ENCODE measurements at regions of chr10 and their contacts with region 1.

Region 1: GRCh38 chr10:131885391-131886161 is 15.2 kb upstream of the PPP2R2D start:
- DNase-seq: peak; percentile 54 to 79
- H3K4me3 ChIP-seq: no peak overlapping the region
- H3K27ac ChIP-seq: no peak overlapping the region
- H3K4me1 ChIP-seq: peaks cover 0 to 3% (median 2%) of the 10 kb centered on the region in 4 donors
- H3K27me3 ChIP-seq: peaks cover 0 to 49% of the 10 kb centered on the region in 2 donors
- CTCF ChIP-seq: peak; percentile 93 to 95

Region 2: GRCh38 chr10:131670341-131670740 is 215.2 kb before region 1 on chr10:
- intact Hi-C with region 1: no loop called
- DNase-seq: no peak
- H3K4me3 ChIP-seq: no peak overlapping the region
- H3K27ac ChIP-seq: no peak overlapping the region
- H3K4me1 ChIP-seq: no peaks in the 10 kb centered on the region
- H3K27me3 ChIP-seq: no peaks in the 10 kb centered on the region
- CTCF ChIP-seq: no peak

Region 3: GRCh38 chr10:131846240-131847101 is 39.1 kb before region 1 on chr10:
- intact Hi-C with region 1: no loop called
- DNase-seq: peak; percentile 11 to 48
- H3K4me3 ChIP-seq: no peak overlapping the region
- H3K27ac ChIP-seq: no peak overlapping the region
- H3K4me1 ChIP-seq: no peaks in the 10 kb centered on the region
- H3K27me3 ChIP-seq: peaks cover 0 to 15% of the 10 kb centered on the region in 2 donors
- CTCF ChIP-seq: no peak

Region 4: GRCh38 chr10:132023092-132023811 is 137.7 kb after region 1 on chr10:
- intact Hi-C with region 1: loop called (anchors 1 kb)
- DNase-seq: peak; percentile 66 to 84
- H3K4me3 ChIP-seq: peak overlapping the region; percentile 4 to 28
- H3K27ac ChIP-seq: no peak overlapping the region
- H3K4me1 ChIP-seq: peaks cover 0 to 9% (median 4%) of the 10 kb centered on the region in 4 donors
- H3K27me3 ChIP-seq: peaks cover 0 to 47% of the 10 kb centered on the region in 2 donors
- CTCF ChIP-seq: peak; percentile 89 to 91

Region 5: GRCh38 chr10:132107186-132107948 is 221.8 kb after region 1 on chr10:
- intact Hi-C with region 1: no loop called
- DNase-seq: peak in 1 of 2 donors; percentile 48
- H3K4me3 ChIP-seq: no peak overlapping the region
- H3K27ac ChIP-seq: no peak overlapping the region
- H3K4me1 ChIP-seq: no peaks in the 10 kb centered on the region
- H3K27me3 ChIP-seq: no peaks in the 10 kb centered on the region
- CTCF ChIP-seq: no peak

Region 6: DNA sequence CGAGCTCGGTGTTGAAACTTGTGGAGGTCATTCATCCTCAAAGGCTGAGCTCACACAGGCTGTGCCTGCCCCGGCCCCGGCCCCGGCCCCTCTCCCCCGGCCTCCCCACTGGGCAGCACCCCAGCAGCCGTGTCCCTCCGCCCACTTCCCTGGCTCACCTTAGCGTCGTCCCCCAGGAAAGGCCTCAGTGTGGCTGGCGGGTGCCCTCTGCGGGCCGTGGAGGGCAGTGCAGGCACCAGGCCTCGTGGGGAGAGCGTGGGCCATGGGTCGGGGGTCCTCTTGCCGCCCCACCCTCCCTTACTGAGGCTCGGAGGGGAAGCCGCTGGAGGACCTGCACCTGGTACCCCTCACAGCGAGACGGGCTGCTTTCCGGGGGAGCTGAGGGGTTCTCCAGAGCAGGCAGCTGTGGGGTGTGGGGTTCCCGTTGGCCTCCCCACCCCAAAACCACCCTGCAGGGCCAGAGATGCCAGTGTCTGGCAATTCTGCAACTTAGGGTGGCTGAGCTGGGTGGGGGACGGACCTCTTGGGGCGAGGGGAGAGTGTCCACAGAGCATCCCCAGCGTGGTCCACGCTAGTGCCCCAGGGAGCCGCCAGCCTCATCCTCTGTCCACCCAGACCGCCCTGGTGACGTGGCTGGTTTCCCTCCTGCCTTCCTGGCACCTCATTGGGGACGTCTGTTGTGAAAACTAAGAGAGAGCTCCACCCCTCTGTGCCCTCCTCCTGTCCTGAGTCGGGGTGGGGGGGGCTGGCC is 257.0 kb after region 1 on chr10:
- intact Hi-C with region 1: loop called (anchors 5 kb)
- DNase-seq: peak in 1 of 2 donors; percentile 63
- H3K4me3 ChIP-seq: no peak overlapping the region
- H3K27ac ChIP-seq: no peak overlapping the region
- H3K4me1 ChIP-seq: peaks cover 0 to 10% (median 0%) of the 10 kb centered on the region in 4 donors
- H3K27me3 ChIP-seq: peaks cover 0 to 30% of the 10 kb centered on the region in 2 donors
- CTCF ChIP-seq: peak; percentile 49 to 71

Measured in tibial artery (tissue), 4 donors.